Right ventricle myocardium inferior (tissue), 1 donor: ENCODE measurements at regions of chr7 and their contacts with region 1.

Region 1: GRCh38 chr7:137898839-137899721 is 52.3 kb upstream of the DGKI start:
- DNase-seq: peak; percentile 88
- ATAC-seq: peak; percentile 93

Region 2: DNA sequence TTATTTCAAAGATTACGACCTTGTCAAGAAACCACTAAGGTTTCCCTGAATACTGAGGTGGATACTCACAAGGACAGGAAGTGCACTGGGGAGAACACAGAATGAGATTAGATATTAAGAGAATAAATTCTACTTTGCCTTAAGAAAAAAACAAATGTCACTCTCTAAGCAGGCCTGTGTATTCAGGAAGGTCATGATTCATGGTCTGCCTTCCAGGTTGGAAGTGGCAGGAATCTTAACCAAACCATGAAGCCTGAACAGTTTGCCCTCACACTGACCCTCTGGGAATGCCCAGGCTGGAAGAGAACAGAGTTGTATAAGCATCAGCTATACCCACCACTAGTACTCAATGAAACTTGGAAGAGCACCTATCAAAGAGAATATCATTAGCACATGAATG is 279.9 kb before region 1 on chr7:
- intact Hi-C with region 1: no loop called
- DNase-seq: no peak
- ATAC-seq: no peak

Region 3: DNA sequence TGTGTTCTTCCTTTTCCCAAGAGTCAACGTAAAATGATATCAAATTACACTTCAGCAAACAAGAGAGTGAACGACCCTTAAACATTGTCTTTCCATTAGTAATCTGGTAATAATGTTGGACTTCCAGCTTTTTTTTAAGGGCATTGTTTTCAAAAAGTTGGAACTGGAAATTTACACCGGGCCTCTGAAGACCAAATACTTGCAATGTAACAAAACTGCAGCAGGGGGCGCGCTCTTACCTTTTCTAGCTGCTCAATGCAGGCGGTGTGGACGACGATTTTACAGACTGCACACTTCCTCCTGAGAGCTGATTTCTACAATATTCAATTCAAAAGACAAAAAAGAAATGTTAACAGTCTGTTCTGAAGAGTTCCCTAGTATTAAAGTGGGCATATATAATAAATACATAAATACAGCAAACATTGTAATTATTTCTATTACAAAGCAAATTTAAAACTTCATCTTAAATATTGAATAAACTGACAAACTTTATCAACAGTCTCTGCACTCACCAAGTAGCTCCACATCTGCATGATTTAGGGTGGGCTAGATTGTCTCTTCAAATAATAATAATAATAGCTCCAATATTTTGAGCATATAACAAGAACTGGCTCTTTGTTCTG is 242.7 kb before region 1 on chr7:
- intact Hi-C with region 1: loop called (anchors 1 kb)
- DNase-seq: peak; percentile 87
- ATAC-seq: peak; percentile 76

Region 4: GRCh38 chr7:137816696-137817320 is 82.3 kb before region 1 on chr7:
- intact Hi-C with region 1: loop called (anchors 2 kb)
- DNase-seq: no peak
- ATAC-seq: no peak

Region 5: GRCh38 chr7:137867289-137867688 is 31.8 kb before region 1 on chr7:
- intact Hi-C with region 1: loop called (anchors 2 kb)
- DNase-seq: no peak
- ATAC-seq: peak; percentile 84

Region 6: GRCh38 chr7:137916980-137917645 is 18.0 kb after region 1 on chr7:
- intact Hi-C with region 1: no loop called
- DNase-seq: no peak
- ATAC-seq: no peak

Region 7: GRCh38 chr7:138008547-138009349 is 109.7 kb after region 1 on chr7:
- intact Hi-C with region 1: loop called (anchors 1 kb)
- DNase-seq: no peak
- ATAC-seq: peak; percentile 56

Region 8: DNA sequence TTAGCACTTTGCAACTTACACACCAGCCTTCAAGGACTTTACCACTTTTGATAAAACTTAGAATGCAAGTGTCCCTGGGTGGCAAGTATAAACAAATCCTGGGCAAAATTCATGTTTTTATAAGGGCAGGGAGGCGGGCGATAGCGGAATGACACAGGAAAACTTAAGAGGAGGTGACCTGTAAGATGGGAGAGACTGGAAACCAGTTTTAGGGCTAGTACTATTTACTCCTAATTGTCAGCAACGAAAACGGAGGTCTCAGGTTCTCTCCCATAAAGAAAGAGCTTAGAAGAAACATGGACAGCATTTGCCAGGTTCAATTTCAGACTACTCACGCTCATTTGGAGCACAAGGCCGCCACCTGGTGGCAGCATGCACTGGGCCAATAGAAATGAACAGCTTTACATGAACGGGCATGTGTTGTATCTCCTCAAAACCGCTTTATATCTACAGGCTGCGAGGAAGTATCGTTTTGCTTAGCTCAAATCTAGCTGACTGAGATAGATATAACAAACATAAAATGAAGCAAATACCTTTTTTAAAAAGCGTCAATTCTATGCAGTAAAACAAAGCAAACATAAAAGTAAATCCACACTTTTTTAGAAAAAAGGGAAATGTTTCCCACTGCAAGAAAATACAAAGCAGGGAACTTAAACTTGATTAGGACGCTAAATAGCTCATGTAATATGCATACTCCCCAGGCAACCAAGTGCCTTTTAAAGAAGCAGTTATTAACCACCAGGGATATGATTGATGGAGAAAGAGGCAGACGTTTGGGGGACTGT is 839.7 kb after region 1 on chr7:
- intact Hi-C with region 1: loop called (anchors 2 kb)
- DNase-seq: peak; percentile 80
- ATAC-seq: peak; percentile 76